ENCODE measurements at regions of chr16 and their contacts with region 1.

Region 1: DNA sequence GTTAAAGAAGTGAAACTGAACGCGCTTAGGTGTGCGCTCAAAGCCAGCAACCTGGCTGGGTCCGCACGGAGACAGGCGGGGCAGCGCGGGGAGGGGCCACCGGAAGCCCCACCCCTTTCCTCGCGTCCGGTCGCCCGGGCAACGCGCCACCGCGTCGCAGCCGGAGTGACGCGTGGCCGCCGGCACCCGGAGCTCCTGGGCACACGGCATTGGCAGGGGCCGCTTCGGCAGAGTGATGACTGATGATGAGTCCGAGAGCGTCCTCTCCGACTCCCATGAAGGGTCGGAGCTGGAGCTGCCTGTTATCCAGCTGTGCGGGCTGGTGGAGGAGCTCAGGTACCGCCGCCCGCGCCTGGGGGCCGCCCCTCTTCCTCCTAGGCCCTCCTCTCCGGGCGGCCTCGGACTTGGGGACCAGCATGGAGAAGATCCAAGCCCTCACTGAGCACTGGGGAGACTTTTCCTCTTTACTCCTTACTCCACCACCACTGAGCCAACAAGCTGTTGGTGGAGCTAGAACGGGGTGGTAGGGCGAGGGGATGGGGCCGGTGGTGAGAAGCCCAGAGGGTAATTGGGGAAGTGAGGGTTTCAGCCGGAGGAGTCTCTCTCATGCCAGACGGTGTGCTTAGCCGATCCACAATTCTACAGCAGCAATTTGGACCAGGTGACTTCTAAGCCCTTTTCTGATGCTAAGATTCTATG is 44.9 kb downstream of the PRSS54 start:
- DNase-seq: peak; percentile 82
- H3K4me3 ChIP-seq: peak overlapping the region; percentile 46 to 70 (median 58)
- H3K27ac ChIP-seq: peak overlapping the region; percentile 39 to 67 (median 62)
- H3K4me1 ChIP-seq: peaks cover 0 to 16% (median 6%) of the 10 kb centered on the region in 4 donors
- H3K27me3 ChIP-seq: no peaks in the 10 kb centered on the region
- CTCF ChIP-seq: no peak
- EP300 ChIP-seq: no peak
- POLR2A ChIP-seq: no peak

Region 2: DNA sequence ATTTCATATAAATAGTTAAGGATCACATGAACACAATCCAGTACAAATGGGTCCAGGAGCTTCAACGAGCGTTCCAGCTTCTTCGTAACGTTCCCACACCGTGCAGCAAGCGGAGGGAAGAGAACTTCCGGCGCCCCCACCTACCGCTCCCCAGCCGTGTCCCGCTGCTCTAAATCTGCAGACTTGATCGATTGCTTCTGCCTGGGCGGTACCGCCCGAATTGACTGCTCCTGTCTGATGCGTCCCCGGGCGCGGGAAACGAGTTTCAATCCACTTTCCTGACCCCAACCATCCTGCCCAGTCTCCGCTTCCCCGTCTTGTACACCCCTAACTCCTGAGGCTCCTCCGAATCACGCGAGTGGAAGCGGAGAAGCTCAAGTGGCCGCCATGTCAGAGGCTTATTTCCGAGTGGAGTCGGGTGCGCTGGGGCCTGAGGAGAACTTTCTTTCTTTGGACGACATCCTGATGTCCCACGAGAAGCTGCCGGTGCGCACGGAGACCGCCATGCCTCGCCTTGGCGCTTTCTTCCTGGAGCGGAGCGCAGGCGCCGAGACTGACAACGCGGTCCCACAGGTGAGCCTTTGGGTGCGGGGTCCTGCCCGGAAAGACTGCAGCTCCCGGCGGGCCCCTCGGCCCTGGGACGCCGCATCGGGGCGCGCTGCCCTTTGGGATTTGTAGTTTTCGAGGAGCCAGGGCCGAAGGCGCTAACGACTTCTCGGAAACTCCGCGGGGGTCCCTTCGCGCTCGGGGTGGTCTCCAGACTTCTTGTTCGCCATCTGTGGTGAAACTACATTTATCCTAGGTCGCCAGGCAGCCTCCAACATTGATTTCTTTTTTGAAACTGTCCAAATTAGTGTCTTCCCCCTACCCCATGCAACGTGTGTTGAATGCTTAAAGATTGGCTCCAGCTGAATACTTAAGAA is 142.5 kb after region 1 on chr16 and contains the start of gene GINS3:
- intact Hi-C with region 1: loop called (anchors 5 kb)
- DNase-seq: peak; percentile 92
- H3K4me3 ChIP-seq: peak within 1 kb of the TSS; percentile 72 to 96 (median 82)
- H3K27ac ChIP-seq: peak within 1 kb of the TSS; percentile 81 to 87 (median 84)
- H3K4me1 ChIP-seq: peaks cover 0 to 7% (median 2%) of the 10 kb centered on the region in 4 donors
- H3K27me3 ChIP-seq: no peaks in the 10 kb centered on the region
- CTCF ChIP-seq: no peak
- EP300 ChIP-seq: no peak
- POLR2A ChIP-seq: no peak
- total RNA-seq, gene GINS3: 1.1 to 2.5 (median 2.4) TPM